Kidney (tissue), 22 donors: ENCODE measurements at regions of chr7 and their contacts with region 1.

Region 1: GRCh38 chr7:134954197-134955082 is 31.9 kb upstream of the AGBL3 start:
- DNase-seq: peak in 2 of 5 donors; percentile 42 to 64
- H3K4me3 ChIP-seq: no peak overlapping the region
- H3K27ac ChIP-seq: no peak overlapping the region
- H3K4me1 ChIP-seq: no peaks in the 10 kb centered on the region
- H3K27me3 ChIP-seq: no peaks in the 10 kb centered on the region
- CTCF ChIP-seq: peak; percentile 52

Region 2: GRCh38 chr7:134686786-134687185 is 267.7 kb before region 1 on chr7:
- intact Hi-C with region 1: loop called (anchors 10 kb)
- DNase-seq: no peak
- H3K4me3 ChIP-seq: no peak overlapping the region
- H3K27ac ChIP-seq: no peak overlapping the region
- H3K4me1 ChIP-seq: peaks cover 0 to 7% (median 0%) of the 10 kb centered on the region in 3 donors
- H3K27me3 ChIP-seq: no peaks in the 10 kb centered on the region
- CTCF ChIP-seq: no peak